ENCODE measurements at regions of chr20 and their contacts with region 1.

Region 1: DNA sequence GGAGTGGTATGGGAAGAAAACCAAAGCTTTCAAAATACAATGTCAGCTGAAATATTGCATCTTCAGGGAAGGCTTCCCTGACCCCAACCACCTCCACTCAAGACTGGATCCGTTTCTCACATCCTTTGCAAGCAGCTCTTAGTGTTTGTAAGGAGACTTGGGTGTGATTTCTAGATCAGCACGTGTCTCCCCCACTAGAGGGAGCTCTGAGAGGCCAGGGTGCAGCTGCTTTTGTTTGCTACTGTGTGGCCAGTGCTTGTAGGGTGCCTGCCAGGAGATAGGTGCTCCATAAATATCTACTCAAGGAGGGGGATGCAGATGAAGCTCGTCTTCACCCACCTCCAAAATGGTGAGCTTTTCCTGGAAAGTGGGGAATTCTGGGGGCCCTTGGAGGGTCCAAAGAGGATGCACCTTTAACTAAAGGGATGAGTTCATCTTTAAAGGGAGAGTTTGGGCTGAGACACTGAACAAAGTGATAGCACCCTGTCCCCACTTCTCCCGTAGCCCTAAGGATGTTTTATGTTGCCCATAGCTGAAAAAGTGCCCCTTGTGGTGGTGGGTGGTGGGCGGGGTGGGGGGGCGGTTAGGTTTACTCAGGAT is 52.6 kb upstream of the MAFB start:
- DNase-seq: peak; percentile 51
- H3K4me3 ChIP-seq: no peak overlapping the region
- H3K27ac ChIP-seq: no peak overlapping the region
- H3K4me1 ChIP-seq: no peaks in the 10 kb centered on the region
- H3K27me3 ChIP-seq: peaks cover 10% of the 10 kb centered on the region
- CTCF ChIP-seq: peak; percentile 42 to 62 (median 47)
- EP300 ChIP-seq: no peak
- POLR2A ChIP-seq: no peak

Region 2: DNA sequence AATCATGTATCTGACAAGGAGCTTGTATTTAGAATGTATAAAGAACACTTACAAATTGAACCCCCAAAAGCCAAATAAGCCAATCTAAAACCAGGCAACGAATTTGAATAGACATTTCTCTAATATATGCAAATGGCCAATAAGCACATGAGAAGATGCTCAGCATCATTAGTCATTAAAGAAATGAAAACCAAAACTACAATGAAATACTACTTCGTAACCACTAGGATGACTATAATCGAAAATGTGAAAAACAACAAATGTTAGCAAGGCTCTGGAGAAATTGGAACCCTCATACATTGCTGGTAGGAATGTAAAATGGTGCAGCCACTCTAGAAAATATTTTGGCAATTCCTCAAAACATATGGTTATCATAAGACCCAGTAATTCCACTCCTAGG is 181.3 kb after region 1 on chr20:
- in situ Hi-C with region 1: no loop called
- intact Hi-C with region 1: loop called (anchors 5 kb)
- DNase-seq: no peak
- H3K4me3 ChIP-seq: no peak overlapping the region
- H3K27ac ChIP-seq: no peak overlapping the region
- H3K4me1 ChIP-seq: no peaks in the 10 kb centered on the region
- H3K27me3 ChIP-seq: no peaks in the 10 kb centered on the region
- CTCF ChIP-seq: no peak
- EP300 ChIP-seq: no peak
- POLR2A ChIP-seq: no peak

Region 3: DNA sequence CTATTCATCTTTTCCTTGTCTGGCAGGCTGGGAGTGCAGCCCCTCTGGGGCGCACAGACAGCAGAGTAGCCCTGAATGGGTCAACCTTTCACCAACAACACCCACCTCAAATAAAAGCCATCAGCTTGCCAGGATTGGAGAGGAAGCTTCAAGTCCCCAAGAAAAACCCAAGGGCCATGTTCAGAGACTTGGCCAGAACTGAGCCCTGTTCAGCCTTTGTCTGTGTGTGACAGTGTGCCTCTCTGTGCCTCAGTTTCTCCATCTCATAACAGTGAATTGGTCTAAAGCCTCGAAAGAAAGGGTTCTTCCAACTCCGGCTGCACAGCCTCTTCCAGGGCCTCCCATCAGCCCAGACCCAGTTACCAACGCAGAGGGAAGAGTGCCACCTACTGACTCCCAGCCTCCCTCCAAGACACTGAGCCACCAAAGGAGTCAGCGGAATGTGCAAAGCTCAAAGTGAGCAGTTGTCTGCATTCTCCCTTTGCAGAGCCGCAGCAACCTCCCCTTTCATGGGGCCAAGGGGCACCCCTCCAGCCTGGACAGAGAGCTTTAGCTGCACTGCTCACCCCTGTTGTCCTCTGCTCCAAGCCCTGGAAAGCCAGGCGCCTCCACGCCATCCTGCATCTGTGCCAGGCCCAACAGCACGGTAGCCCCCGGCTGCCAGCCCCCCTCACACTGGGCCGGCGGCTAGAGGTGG is 204.3 kb after region 1 on chr20:
- in situ Hi-C with region 1: loop called in 2 of 4 experiments (anchors 10 to 25 kb)
- intact Hi-C with region 1: no loop called
- DNase-seq: peak; percentile 41
- H3K4me3 ChIP-seq: no peak overlapping the region
- H3K27ac ChIP-seq: no peak overlapping the region
- H3K4me1 ChIP-seq: no peaks in the 10 kb centered on the region
- H3K27me3 ChIP-seq: no peaks in the 10 kb centered on the region
- CTCF ChIP-seq: peak; percentile 23 to 41 (median 34)
- EP300 ChIP-seq: no peak
- POLR2A ChIP-seq: no peak

Region 4: DNA sequence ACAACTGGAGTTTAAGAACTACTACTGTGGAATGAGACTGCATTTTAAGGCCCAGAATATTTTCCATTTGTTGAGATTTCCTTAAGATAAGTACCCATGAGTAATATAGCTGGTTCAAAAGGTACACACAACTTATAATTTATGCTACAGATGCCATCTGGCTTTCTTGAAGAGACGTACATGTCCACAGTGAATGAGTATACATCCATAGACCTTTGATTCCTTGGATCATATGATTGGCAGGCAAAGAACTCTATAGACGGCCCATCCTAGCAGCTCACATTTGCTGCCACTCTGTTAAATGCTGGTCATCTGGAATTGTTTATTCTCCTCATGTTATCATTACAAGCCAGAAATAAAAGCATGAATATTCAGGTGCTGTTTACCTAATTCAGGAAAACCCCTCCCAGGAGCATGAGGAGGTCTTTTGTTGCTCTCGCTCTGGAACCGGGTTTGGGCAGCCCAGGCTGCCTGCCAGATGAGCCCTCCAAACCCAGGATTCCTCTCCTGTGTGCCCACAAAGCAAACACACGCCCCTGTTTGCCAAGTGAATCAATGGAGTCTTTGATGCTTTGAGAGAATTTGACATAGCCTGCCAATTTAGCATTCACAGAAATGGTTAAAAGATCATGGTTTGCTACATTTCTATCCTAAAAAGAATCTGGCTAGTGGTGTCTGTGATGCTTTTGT is 378.1 kb after region 1 on chr20:
- in situ Hi-C with region 1: loop called in 1 of 4 experiments (anchors 25 kb)
- intact Hi-C with region 1: no loop called
- DNase-seq: no peak
- H3K4me3 ChIP-seq: no peak overlapping the region
- H3K27ac ChIP-seq: peak overlapping the region in 3 of 4 donors; percentile 12 to 49 (median 37)
- H3K4me1 ChIP-seq: peaks cover 0 to under 1% (median under 1%) of the 10 kb centered on the region in 4 donors
- H3K27me3 ChIP-seq: no peaks in the 10 kb centered on the region
- CTCF ChIP-seq: no peak
- EP300 ChIP-seq: no peak
- POLR2A ChIP-seq: no peak